ENCODE measurements at regions of chr2 and their contacts with region 1.

Region 1: DNA sequence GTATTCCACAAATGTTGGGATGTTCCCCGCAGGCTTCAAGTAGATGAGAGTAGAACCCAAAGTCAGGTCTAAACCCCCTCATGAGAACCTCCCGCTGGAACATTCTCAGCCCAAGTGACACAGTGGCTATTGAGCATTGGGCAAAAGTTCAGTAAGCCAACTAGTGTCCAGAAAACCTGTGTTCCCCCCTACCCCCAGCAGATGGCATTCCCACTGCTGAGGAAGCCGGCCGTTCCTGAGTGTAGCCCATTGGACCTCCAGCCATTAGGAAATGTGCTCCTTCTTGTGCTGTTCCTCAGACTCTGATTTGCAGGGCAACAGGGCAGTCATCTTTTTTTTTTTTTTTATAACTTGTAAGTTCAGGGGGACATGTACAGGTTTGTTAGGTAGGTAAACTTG is 152.1 kb downstream of the NCK2 start:
- DNase-seq: peak in 1 of 2 experiments; percentile 34
- H3K4me3 ChIP-seq: no peak overlapping the region
- H3K4me3 Mint-ChIP-seq: no peak overlapping the region
- H3K27ac Mint-ChIP-seq: no peak overlapping the region
- H3K4me1 ChIP-seq: no peaks in the 10 kb centered on the region
- H3K4me1 Mint-ChIP-seq: no peaks in the 10 kb centered on the region
- H3K27me3 ChIP-seq: no peaks in the 10 kb centered on the region
- H3K27me3 Mint-ChIP-seq: no peaks in the 10 kb centered on the region
- CTCF ChIP-seq: peak in 1 of 2 experiments; percentile 0

Region 2: GRCh38 chr2:105969555-105969954 is 72.8 kb after region 1 on chr2:
- CTCF ChIA-PET with region 1: no interaction called
- POLR2A ChIA-PET with region 1: no interaction called
- intact Hi-C with region 1: loop called (anchors 10 kb)
- DNase-seq: peak in 1 of 2 experiments; percentile 30
- H3K4me3 ChIP-seq: no peak overlapping the region
- H3K4me3 Mint-ChIP-seq: no peak overlapping the region
- H3K27ac Mint-ChIP-seq: no peak overlapping the region
- H3K4me1 ChIP-seq: 0 out of 2 replicates have a peak, but pooled peaks cover 8% of the 10 kb centered on the region
- H3K4me1 Mint-ChIP-seq: no peaks in the 10 kb centered on the region
- H3K27me3 ChIP-seq: no peaks in the 10 kb centered on the region
- H3K27me3 Mint-ChIP-seq: no peaks in the 10 kb centered on the region
- CTCF ChIP-seq: peak in 1 of 2 experiments; percentile 23

Region 3: GRCh38 chr2:106020821-106021661 is 124.3 kb after region 1 on chr2:
- CTCF ChIA-PET with region 1: no interaction called
- POLR2A ChIA-PET with region 1: no interaction called
- intact Hi-C with region 1: no loop called
- DNase-seq: no peak
- H3K4me3 ChIP-seq: no peak overlapping the region
- H3K4me3 Mint-ChIP-seq: no peak overlapping the region
- H3K27ac Mint-ChIP-seq: no peak overlapping the region
- H3K4me1 ChIP-seq: peaks cover 11% of the 10 kb centered on the region
- H3K4me1 Mint-ChIP-seq: peaks cover 12% of the 10 kb centered on the region
- H3K27me3 ChIP-seq: no peaks in the 10 kb centered on the region
- H3K27me3 Mint-ChIP-seq: no peaks in the 10 kb centered on the region
- CTCF ChIP-seq: no peak